GM12878 (cell line): ENCODE measurements at regions of chr9 and their contacts with region 1.

Region 1: GRCh38 chr9:137029058-137029936 is 1.3 kb upstream of the ABCA2 start:
- DNase-seq: no peak
- ATAC-seq: peak; percentile 86
- H3K4me3 ChIP-seq: no peak overlapping the region
- H3K27ac ChIP-seq: no peak overlapping the region
- H3K4me1 ChIP-seq: peaks cover 41% of the 10 kb centered on the region
- H3K27me3 ChIP-seq: peaks cover 0 to 2% of the 10 kb centered on the region in 2 experiments; a peak in 2 of 4 replicates
- CTCF ChIP-seq: peak; percentile 84 to 97 (median 93)
- EP300 ChIP-seq: no peak
- POLR2A ChIP-seq: no peak
- RAD21 ChIP-seq: peak; percentile 34; the same call in 1 of the 2 replicates

Region 2: GRCh38 chr9:136949817-136950655 is 79.3 kb before region 1 on chr9:
- CTCF ChIA-PET with region 1: interaction called, 163 read pairs
- POLR2A ChIA-PET with region 1: interaction called, 19 read pairs
- RAD21 ChIA-PET with region 1: interaction called, 109 read pairs
- SMC1A ChIA-PET with region 1: interaction called, 77 read pairs
- in situ Hi-C with region 1: no loop called
- intact Hi-C with region 1: no loop called
- DNase-seq: peak; percentile 73
- ATAC-seq: peak; percentile 98
- H3K4me3 ChIP-seq: peak overlapping the region; percentile 77
- H3K27ac ChIP-seq: peak overlapping the region; percentile 53
- H3K4me1 ChIP-seq: peaks cover 7% of the 10 kb centered on the region
- H3K27me3 ChIP-seq: no peaks in the 10 kb centered on the region
- CTCF ChIP-seq: peak in 2 of 3 experiments; percentile 22 to 37; a peak in 2 of 6 replicates
- EP300 ChIP-seq: no peak
- POLR2A ChIP-seq: no peak
- RAD21 ChIP-seq: no peak

Region 3: DNA sequence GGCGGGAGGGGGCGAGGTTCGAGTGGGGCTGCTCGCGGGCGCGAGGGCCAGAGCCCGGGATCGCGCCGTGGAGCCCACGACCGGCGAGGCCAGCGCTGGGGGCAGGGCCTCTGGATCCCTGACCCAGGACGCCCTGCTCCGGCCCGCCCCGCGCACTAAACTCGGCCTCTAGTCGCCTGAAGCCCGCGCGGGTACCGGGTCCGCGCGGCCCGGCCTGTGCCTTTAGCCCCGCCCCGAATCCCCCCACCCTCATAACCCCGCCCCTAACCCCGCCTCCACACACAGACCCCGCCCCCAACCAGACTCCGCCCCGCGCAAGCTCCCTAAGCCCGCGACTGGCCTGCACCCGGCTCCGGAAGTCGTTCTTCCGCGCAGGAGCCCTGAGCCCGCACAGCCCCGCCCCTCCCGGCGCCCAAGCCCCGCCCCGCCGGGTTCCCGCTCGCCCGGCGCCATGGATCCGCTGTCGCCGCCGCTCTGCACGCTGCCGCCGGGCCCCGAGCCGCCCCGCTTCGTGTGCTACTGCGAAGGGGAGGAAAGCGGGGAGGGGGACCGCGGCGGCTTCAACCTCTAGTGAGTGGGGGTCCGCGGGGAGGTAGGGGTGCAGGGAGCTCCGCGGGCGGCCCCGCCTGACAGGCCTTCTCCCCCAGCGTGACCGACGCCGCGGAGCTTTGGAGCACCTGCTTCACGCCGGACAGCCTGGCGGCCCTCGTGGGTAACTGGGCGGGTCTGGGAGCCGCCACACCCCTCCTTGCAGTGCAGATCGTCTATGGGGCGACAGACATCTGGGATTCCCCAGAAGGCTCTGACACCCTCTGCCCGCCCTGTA is 37.1 kb before region 1 on chr9 and contains the start of gene PAXX:
- CTCF ChIA-PET with region 1: interaction called, 17 read pairs
- POLR2A ChIA-PET with region 1: interaction called, 4 read pairs
- RAD21 ChIA-PET with region 1: no interaction called
- SMC1A ChIA-PET with region 1: no interaction called
- in situ Hi-C with region 1: no loop called
- intact Hi-C with region 1: no loop called
- DNase-seq: no peak
- ATAC-seq: peak; percentile 94
- H3K4me3 ChIP-seq: peak within 1 kb of the TSS; percentile 73
- H3K27ac ChIP-seq: peak within 1 kb of the TSS; percentile 63
- H3K4me1 ChIP-seq: peaks cover 20% of the 10 kb centered on the region
- H3K27me3 ChIP-seq: peaks cover 2 to 4% of the 10 kb centered on the region in 2 experiments; a peak in 3 of 4 replicates
- CTCF ChIP-seq: no peak
- EP300 ChIP-seq: no peak
- POLR2A ChIP-seq: peak; percentile 67
- RAD21 ChIP-seq: no peak
- polyA plus RNA-seq, gene PAXX: 0.18 to 2.9 TPM

Region 4: GRCh38 chr9:137000177-137000883 is 29.0 kb before region 1 on chr9:
- CTCF ChIA-PET with region 1: interaction called, 17 read pairs
- POLR2A ChIA-PET with region 1: interaction called, 3 read pairs
- RAD21 ChIA-PET with region 1: interaction called, 16 read pairs
- SMC1A ChIA-PET with region 1: interaction called, 6 read pairs
- in situ Hi-C with region 1: no loop called
- intact Hi-C with region 1: no loop called
- DNase-seq: peak; percentile 82
- ATAC-seq: peak; percentile 87
- H3K4me3 ChIP-seq: no peak overlapping the region
- H3K27ac ChIP-seq: no peak overlapping the region
- H3K4me1 ChIP-seq: peaks cover 37% of the 10 kb centered on the region
- H3K27me3 ChIP-seq: peaks cover 2 to 10% of the 10 kb centered on the region in 2 experiments; a peak in 3 of 4 replicates
- CTCF ChIP-seq: no peak
- EP300 ChIP-seq: peak; percentile 50 to 51; a peak in 2 of 4 replicates
- POLR2A ChIP-seq: no peak
- RAD21 ChIP-seq: no peak

Region 5: DNA sequence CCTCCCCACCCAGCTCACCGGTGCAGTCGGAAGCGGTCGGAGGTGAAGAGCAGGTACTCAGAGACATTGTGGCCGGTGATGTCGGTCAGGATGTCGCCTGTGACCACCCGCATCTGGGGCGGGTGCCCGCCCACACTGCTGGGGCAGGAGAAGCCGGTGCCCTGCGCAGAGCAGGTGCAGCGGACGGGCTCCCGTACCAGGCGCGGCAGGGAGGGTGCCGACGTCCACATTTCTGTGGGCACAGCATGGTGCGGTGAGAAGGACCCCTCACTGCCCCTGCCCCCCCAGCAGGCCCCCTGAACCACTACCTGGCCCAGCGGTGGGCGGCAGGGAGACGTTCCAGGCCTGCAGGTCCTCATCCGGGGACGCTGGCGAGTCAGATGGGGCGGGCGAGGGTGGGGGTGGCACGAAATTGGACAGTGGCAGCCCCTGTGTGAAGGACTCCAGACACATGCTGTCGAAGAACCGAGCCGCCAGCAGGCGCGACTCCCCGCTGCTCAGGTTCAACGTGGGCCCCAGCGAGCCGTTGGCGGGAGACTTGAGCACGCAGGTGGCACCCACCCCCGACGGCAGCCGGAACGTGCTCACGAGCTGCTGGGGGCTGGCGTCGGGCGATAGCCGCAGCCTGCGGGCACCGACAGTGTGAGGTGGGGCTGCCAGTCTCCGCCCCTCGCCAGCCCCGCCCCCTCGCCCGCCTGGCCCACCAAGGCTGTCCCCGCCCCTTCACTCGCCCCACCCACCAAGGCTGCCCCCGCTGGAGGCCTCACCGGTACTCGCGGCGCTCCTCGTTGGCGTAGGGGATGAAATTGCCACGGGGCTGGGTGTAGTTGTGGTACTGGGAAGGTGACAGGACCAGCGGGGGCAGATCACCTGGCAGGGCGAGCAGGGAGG is 16.4 kb before region 1 on chr9:
- CTCF ChIA-PET with region 1: no interaction called
- POLR2A ChIA-PET with region 1: no interaction called
- RAD21 ChIA-PET with region 1: no interaction called
- SMC1A ChIA-PET with region 1: no interaction called
- in situ Hi-C with region 1: no loop called
- intact Hi-C with region 1: no loop called
- DNase-seq: no peak
- ATAC-seq: no peak
- H3K4me3 ChIP-seq: no peak overlapping the region
- H3K27ac ChIP-seq: no peak overlapping the region
- H3K4me1 ChIP-seq: no peaks in the 10 kb centered on the region
- H3K27me3 ChIP-seq: no peaks in the 10 kb centered on the region
- CTCF ChIP-seq: no peak
- EP300 ChIP-seq: no peak
- POLR2A ChIP-seq: no peak
- RAD21 ChIP-seq: no peak

Region 6: GRCh38 chr9:137046098-137046787 is 16.9 kb after region 1 on chr9 and contains the start of gene NPDC1:
- CTCF ChIA-PET with region 1: interaction called, 31 read pairs
- POLR2A ChIA-PET with region 1: no interaction called
- RAD21 ChIA-PET with region 1: interaction called, 4 read pairs
- SMC1A ChIA-PET with region 1: interaction called, 6 read pairs
- in situ Hi-C with region 1: no loop called
- intact Hi-C with region 1: no loop called
- DNase-seq: no peak
- ATAC-seq: peak; percentile 90
- H3K4me3 ChIP-seq: no peak within 1 kb of the TSS
- H3K27ac ChIP-seq: no peak within 1 kb of the TSS
- H3K4me1 ChIP-seq: no peaks in the 10 kb centered on the region
- H3K27me3 ChIP-seq: peaks cover 12 to 18% of the 10 kb centered on the region in 2 experiments; a peak in 3 of 4 replicates
- CTCF ChIP-seq: peak; percentile 82 to 95 (median 93)
- EP300 ChIP-seq: no peak
- POLR2A ChIP-seq: no peak
- RAD21 ChIP-seq: peak; percentile 63
- polyA plus RNA-seq, gene NPDC1: not detected

Region 7: DNA sequence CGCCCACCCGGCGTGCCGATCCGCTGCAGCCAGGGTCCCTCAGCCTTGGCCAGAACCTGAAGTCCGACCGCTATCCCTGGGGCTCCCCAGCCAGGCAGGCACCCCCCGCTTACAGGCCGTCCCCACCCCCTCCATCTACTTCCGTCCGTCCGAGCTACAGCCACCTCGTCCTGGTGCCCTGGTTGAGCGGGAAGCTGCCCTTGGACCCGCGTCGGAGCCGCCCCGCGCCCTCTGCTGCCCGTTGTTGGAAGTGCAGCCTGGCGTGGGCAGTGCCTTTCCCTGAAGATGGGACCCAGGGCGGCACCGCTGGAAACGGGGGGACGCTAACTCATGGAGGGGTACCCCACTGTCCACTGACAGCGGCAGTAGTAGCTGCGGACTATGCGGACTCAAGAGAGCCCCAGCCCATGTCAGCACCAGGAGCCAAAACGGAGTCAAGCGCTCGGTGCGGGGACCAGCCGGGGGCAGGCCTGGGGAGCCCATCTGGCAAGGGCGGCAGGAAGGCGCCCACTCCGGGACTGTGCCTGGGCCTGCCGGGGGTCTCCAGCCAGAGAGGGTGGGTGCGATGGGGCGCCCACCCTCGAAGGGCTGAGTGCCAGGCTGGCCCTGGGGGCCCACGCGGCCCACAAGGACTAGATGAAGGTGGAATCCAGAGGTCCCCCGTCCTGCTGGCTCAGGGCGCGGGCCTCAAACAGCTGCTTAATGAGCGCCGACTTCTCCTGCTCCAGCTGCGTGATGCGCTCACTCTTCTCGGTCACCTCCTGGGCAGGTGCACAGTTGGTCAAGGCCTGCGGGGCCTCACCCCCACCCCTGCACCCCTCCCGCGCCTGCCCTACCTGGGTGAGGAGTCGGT is 35.0 kb after region 1 on chr9:
- CTCF ChIA-PET with region 1: interaction called, 46 read pairs
- POLR2A ChIA-PET with region 1: no interaction called
- RAD21 ChIA-PET with region 1: interaction called, 15 read pairs
- SMC1A ChIA-PET with region 1: interaction called, 12 read pairs
- in situ Hi-C with region 1: no loop called
- intact Hi-C with region 1: no loop called
- DNase-seq: no peak
- ATAC-seq: peak; percentile 49
- H3K4me3 ChIP-seq: no peak overlapping the region
- H3K27ac ChIP-seq: no peak overlapping the region
- H3K4me1 ChIP-seq: peaks cover 15% of the 10 kb centered on the region
- H3K27me3 ChIP-seq: no peaks in the 10 kb centered on the region
- CTCF ChIP-seq: peak; percentile 78 to 96 (median 85)
- EP300 ChIP-seq: no peak
- POLR2A ChIP-seq: no peak
- RAD21 ChIP-seq: peak; percentile 61